ENCODE measurements at regions of chr1 and their contacts with region 1.

Region 1: DNA sequence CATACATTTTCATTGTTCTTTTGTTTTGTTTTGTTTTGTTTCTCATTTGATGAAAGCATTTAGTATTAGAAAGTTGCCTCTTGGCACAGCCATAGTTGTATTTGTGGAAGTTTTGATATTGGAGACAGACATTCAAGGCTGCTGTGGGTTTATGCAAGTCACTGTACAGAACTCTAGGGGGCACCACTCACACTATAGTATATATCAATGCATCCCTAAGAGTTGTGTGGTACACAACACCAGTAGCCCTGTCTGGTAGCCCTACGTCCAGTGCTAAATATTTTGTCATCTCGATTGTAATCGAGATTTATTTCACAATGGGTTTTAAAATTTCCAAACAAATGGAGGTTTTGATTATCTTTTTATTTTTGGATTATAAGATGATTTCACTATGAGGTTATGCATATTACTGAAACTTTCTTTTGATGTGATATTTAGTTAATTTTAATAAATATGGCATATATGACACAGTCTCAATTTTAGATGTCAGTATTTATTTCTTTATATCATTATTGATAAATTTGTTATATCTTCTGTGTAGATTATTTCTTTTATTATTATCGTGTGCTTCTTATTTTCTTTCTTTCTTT is 112.2 kb downstream of the NR5A2 start:
- DNase-seq: peak; percentile 67
- H3K4me3 ChIP-seq: no peak overlapping the region
- H3K27ac ChIP-seq: no peak overlapping the region
- H3K4me1 ChIP-seq: no peaks in the 10 kb centered on the region
- H3K27me3 ChIP-seq: no peaks in the 10 kb centered on the region
- CTCF ChIP-seq: peak; percentile 64 to 65
- POLR2A ChIP-seq: no peak

Region 2: DNA sequence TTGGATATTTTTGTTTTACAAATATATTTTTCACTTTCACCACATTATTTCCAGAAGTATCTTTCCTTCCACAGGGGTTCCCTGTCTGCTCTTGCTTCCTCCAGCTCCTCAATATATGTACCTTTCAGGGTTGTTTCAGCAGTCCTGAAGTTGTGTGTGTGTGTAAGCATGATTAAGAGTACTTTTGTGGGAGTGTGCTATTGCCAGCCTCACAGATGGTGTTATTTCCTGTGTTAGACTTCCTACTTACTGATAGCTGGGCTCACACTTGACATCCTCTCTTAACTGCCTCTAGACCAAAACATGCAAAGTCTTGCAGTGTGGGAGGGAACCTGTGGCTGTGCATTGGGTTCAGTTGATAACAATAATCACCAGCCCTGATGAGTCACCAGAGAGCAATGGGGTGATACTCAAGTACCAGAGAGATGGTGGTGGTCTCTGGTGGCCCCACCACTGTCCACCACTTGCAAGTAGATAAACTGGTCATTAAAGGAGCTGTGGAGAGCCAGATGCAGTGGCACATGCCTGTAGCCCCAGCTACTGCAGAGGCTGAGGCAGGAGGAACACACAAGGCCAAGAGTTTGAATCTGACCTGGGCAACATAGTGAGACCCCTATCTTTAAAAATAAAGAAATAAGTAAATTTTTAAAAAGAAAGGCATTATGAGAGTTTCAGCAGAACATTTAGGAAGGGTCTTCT is 14.5 kb after region 1 on chr1:
- CTCF ChIA-PET with region 1: interaction called, 10 read pairs
- POLR2A ChIA-PET with region 1: no interaction called
- dilution Hi-C with region 1: no loop called
- intact Hi-C with region 1: no loop called
- DNase-seq: peak; percentile 94
- H3K4me3 ChIP-seq: no peak overlapping the region
- H3K27ac ChIP-seq: no peak overlapping the region
- H3K4me1 ChIP-seq: peaks cover 12% of the 10 kb centered on the region
- H3K27me3 ChIP-seq: no peaks in the 10 kb centered on the region
- CTCF ChIP-seq: no peak
- POLR2A ChIP-seq: no peak

Region 3: DNA sequence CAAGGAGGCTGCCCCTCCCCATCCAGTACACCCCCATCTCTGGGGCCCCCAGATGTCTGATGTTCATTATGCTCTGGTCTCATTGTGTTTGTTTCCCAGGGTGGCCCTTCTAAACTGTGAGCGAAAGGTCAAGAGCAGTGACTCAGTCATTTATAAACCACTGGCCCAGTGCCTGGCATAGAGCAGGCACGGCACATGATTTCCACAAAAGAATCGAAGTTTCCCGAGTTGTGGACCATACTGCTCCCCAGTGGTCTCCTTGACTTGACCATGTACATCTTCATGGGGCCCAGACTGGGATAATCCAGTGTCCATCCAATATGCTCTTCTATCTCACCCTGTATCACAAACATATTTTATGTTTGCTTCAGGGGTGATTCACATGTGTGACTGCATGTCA is 41.1 kb after region 1 on chr1:
- CTCF ChIA-PET with region 1: no interaction called
- POLR2A ChIA-PET with region 1: no interaction called
- dilution Hi-C with region 1: no loop called
- intact Hi-C with region 1: loop called (anchors 1 kb)
- DNase-seq: peak; percentile 78
- H3K4me3 ChIP-seq: no peak overlapping the region
- H3K27ac ChIP-seq: no peak overlapping the region
- H3K4me1 ChIP-seq: peaks cover 31% of the 10 kb centered on the region
- H3K27me3 ChIP-seq: no peaks in the 10 kb centered on the region
- CTCF ChIP-seq: no peak
- POLR2A ChIP-seq: no peak

Region 4: DNA sequence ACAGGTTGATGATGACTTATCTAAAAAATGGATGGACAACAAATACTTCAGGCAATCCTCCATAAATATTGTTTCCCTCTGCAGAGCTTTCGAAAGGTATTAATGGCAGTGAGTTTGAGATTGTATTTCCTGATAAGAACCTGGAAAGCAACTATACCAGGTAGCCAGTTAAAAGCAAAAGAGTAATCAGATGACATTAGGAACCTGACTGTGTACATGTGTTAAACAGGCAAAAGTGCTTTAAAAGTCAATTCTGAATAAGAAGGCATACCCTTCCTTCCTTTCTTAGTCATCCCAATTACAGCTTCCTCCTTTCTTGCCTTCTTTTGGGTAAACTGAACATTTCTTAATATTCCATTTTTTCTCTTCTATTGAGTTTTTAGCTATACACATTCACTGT is 125.3 kb after region 1 on chr1:
- CTCF ChIA-PET with region 1: interaction called, 10 read pairs
- POLR2A ChIA-PET with region 1: no interaction called
- dilution Hi-C with region 1: no loop called
- intact Hi-C with region 1: no loop called
- DNase-seq: peak; percentile 15
- H3K4me3 ChIP-seq: no peak overlapping the region
- H3K27ac ChIP-seq: no peak overlapping the region
- H3K4me1 ChIP-seq: peaks cover 7% of the 10 kb centered on the region
- H3K27me3 ChIP-seq: no peaks in the 10 kb centered on the region
- CTCF ChIP-seq: no peak
- POLR2A ChIP-seq: no peak

Region 5: GRCh38 chr1:200279810-200280411 is 140.2 kb after region 1 on chr1:
- CTCF ChIA-PET with region 1: interaction called, 45 read pairs
- POLR2A ChIA-PET with region 1: no interaction called
- dilution Hi-C with region 1: no loop called
- intact Hi-C with region 1: loop called (anchors 1 kb)
- DNase-seq: peak; percentile 74
- H3K4me3 ChIP-seq: no peak overlapping the region
- H3K27ac ChIP-seq: no peak overlapping the region
- H3K4me1 ChIP-seq: no peaks in the 10 kb centered on the region
- H3K27me3 ChIP-seq: peaks cover 3 to 5% of the 10 kb centered on the region in 2 experiments
- CTCF ChIP-seq: peak; percentile 66 to 69
- POLR2A ChIP-seq: no peak

Region 6: DNA sequence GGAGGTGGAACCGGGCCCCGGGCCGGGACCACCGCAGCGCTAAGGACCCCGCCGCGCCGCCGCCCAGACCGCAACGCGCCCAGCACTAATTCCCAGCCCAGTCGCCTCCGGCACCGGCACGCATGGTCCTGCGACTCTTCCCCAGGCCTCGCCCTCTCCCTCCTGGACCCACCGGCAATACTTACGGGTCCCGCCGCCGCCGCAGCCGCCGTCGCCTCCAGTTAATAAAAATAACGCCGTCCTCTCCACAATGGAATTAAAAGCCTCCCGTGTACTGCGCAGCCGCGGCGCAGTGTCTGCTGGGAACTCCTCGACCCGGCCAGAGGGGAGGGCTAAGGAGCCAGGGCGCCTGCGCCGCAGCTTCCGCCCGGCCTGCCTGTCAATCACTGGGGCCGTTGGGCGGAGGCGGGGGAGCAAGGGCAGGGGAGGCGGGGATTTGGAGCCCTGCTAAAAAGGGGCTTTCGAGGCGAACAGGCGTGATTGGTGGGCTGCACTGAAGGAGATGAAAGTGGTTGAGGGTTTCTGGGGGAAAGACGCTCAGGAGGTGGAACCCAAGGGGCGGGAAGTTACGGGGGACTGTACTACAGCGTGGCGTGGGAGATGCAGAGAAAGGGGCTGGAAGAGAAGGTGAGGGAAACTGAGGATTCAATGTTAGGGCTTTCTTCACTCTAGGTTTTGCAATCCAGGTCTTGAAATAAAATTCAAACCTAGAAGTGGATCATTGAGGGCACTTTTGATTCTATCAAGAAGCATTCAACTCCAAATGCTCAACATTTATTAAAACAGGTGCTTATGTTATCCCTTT is 270.2 kb after region 1 on chr1 and contains the start of gene ZNF281:
- CTCF ChIA-PET with region 1: no interaction called
- POLR2A ChIA-PET with region 1: no interaction called
- dilution Hi-C with region 1: no loop called
- intact Hi-C with region 1: loop called (anchors 5 kb)
- DNase-seq: peak; percentile 95
- H3K4me3 ChIP-seq: peak within 1 kb of the TSS; percentile 87 to 98 (median 95)
- H3K27ac ChIP-seq: peak within 1 kb of the TSS; percentile 86
- H3K4me1 ChIP-seq: peaks cover 39% of the 10 kb centered on the region
- H3K27me3 ChIP-seq: no peaks in the 10 kb centered on the region
- CTCF ChIP-seq: no peak
- POLR2A ChIP-seq: peak; percentile 68
- total RNA-seq, gene ZNF281: 22.3 and 23.2 TPM in 2 replicates

Region 7: DNA sequence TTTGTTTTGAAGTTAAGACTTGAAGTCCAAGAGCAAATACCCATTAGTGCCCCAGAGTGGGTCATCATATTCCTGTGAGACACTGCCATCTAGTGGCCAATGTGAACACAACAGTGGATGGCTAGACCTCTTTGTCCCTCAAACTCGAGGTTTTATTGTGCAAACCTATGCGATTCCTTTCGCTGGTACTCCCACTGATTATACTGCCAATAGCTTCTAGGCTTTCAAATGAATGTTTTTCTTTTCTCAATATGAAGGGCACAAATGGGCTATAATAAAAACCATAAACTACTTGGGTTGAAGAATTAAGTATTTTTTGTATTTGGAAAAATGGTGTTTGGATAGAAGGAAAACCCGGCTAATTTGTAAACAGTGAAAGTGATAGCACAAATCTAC is 370.5 kb after region 1 on chr1:
- CTCF ChIA-PET with region 1: interaction called, 3 read pairs
- POLR2A ChIA-PET with region 1: no interaction called
- dilution Hi-C with region 1: no loop called
- intact Hi-C with region 1: loop called (anchors 2 kb)
- DNase-seq: peak; percentile 79
- H3K4me3 ChIP-seq: no peak overlapping the region
- H3K27ac ChIP-seq: no peak overlapping the region
- H3K4me1 ChIP-seq: no peaks in the 10 kb centered on the region
- H3K27me3 ChIP-seq: peaks cover 8 to 12% of the 10 kb centered on the region in 2 experiments
- CTCF ChIP-seq: peak; percentile 70 to 77
- POLR2A ChIP-seq: no peak